ENCODE measurements at regions of chr14 and their contacts with region 1.

Region 1: GRCh38 chr14:59428581-59429012 is 36.6 kb downstream of the GPR135 start:
- DNase-seq: no peak
- ATAC-seq: peak in 2 of 4 donors; percentile 17 to 27
- H3K4me3 ChIP-seq: no peak overlapping the region
- H3K27ac ChIP-seq: peak overlapping the region in 11 of 12 donors; percentile 44 to 79 (median 63)
- H3K4me1 ChIP-seq: peaks cover 0 to 64% (median 35%) of the 10 kb centered on the region in 12 donors
- H3K27me3 ChIP-seq: no peaks in the 10 kb centered on the region
- CTCF ChIP-seq: peak in 11 of 12 donors; percentile 11 to 64 (median 39)
- POLR2A ChIP-seq: no peak

Region 2: GRCh38 chr14:59132796-59133494 is 295.7 kb before region 1 on chr14:
- intact Hi-C with region 1: loop called in 2 of 10 experiments (anchors 5 kb)
- DNase-seq: no peak
- ATAC-seq: peak in 1 of 4 donors; percentile 61
- H3K4me3 ChIP-seq: no peak overlapping the region
- H3K27ac ChIP-seq: no peak overlapping the region
- H3K4me1 ChIP-seq: peaks cover 0 to 11% (median 0%) of the 10 kb centered on the region in 12 donors
- H3K27me3 ChIP-seq: no peaks in the 10 kb centered on the region
- CTCF ChIP-seq: peak in 5 of 12 donors; percentile 13 to 40 (median 18)
- POLR2A ChIP-seq: no peak

Region 3: DNA sequence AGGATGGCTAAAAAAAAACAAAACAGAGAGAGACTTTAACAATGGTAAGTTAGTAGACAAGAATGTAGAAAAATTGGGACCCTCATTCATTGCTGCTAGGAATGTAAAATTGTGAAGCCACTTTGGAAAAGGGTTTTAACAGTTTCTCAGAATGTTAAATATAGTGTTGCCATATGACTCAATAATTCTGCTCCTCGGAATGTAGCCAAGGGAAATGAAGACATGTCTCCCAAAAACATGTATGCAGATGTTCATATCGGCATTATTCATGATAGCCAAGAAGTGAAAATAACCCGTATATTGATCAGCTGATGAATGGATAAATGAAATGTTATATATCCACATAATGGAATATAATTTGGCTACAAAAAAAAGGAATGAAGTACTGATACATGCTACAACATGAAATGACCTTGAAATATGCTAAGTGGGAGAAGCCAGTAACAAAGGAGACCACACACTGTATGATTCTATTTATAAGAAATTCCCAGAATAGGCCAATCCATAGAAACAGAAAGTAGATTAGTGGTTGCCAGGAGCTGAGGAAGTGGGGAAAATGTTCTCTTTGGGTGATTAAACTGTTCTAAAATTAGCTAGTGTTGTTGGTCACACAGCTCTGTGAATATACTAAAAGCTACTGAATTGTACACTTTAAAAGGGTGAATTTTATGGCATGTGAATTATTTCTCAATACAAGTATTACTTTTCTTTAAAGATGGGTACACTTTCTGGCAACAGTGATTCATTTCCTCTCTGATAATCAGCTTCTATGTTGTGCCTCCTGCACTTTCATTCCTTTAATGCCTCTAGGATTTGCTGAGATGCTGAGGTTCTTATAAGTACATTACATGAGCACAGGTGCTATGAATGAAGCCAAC is 107.6 kb before region 1 on chr14:
- intact Hi-C with region 1: loop called in 1 of 10 experiments (anchors 10 kb)
- DNase-seq: no peak
- ATAC-seq: peak; percentile 27 to 84 (median 76)
- H3K4me3 ChIP-seq: peak overlapping the region in 1 of 12 donors; percentile 12
- H3K27ac ChIP-seq: peak overlapping the region; percentile 68 to 90 (median 79)
- H3K4me1 ChIP-seq: peaks cover 6 to 72% (median 58%) of the 10 kb centered on the region in 12 donors
- H3K27me3 ChIP-seq: no peaks in the 10 kb centered on the region
- CTCF ChIP-seq: no peak
- POLR2A ChIP-seq: no peak

Region 4: DNA sequence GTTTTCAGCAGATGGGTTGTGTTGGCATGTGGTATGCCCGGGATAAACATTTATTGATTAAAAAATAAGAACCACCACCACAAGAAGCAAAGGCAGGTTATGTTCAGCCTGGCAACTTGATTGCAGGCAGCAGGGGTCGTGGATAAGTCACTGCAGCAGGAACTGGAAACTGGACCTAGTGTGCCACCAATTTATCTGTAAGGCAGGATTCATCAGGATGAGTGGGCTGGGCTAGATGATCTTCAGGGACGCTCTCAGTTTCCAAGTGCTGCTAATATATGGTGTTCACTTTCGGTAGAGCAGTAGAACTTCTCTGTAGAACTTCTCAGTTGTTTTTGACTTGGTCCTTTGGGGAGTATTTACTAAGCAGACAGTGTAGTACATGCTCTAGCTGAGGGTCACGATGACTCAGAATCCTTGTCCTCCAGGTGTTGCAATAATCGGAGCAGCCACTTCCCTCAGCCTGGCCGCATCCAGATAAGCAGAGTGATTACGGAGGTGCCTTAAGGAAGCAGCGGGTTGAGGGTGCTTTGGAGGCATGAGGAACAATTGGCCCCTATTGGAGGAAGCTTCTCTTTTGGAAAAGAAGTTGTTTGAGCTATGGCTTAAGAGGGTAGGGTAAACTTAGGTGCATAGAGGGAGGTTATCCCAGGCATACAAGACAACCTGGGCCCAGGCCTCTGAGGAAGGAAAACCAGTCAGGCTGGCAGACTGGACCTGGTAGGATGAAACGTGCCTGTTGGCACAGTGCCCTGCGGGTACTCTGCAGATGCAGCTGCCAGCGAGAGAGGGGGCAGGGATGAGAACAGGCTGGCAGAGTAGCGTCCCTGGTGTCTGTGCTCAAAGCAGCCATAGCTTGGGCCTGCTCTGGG is 67.4 kb before region 1 on chr14:
- intact Hi-C with region 1: loop called in 6 of 10 experiments (anchors 5 to 10 kb)
- DNase-seq: peak; percentile 75 to 92 (median 86)
- ATAC-seq: peak; percentile 68 to 77 (median 74)
- H3K4me3 ChIP-seq: peak overlapping the region in 5 of 12 donors; percentile 4 to 37 (median 21)
- H3K27ac ChIP-seq: peak overlapping the region; percentile 61 to 93 (median 84)
- H3K4me1 ChIP-seq: peaks cover 0 to 83% (median 60%) of the 10 kb centered on the region in 12 donors
- H3K27me3 ChIP-seq: no peaks in the 10 kb centered on the region
- CTCF ChIP-seq: peak in 3 of 12 donors; percentile 9 to 24 (median 19)
- POLR2A ChIP-seq: no peak

Region 5: GRCh38 chr14:59394268-59394667 is 34.3 kb before region 1 on chr14:
- intact Hi-C with region 1: no loop called
- DNase-seq: no peak
- ATAC-seq: no peak
- H3K4me3 ChIP-seq: no peak overlapping the region
- H3K27ac ChIP-seq: no peak overlapping the region
- H3K4me1 ChIP-seq: peaks cover 0 to 7% (median 0%) of the 10 kb centered on the region in 12 donors
- H3K27me3 ChIP-seq: no peaks in the 10 kb centered on the region
- CTCF ChIP-seq: no peak
- POLR2A ChIP-seq: no peak

Region 6: GRCh38 chr14:59474172-59474571 is 45.6 kb after region 1 on chr14:
- intact Hi-C with region 1: no loop called
- DNase-seq: no peak
- ATAC-seq: no peak
- H3K4me3 ChIP-seq: no peak overlapping the region
- H3K27ac ChIP-seq: peak overlapping the region in 1 of 12 donors; percentile 1
- H3K4me1 ChIP-seq: peaks cover 0 to 9% (median 0%) of the 10 kb centered on the region in 12 donors
- H3K27me3 ChIP-seq: no peaks in the 10 kb centered on the region
- CTCF ChIP-seq: no peak
- POLR2A ChIP-seq: no peak

Region 7: DNA sequence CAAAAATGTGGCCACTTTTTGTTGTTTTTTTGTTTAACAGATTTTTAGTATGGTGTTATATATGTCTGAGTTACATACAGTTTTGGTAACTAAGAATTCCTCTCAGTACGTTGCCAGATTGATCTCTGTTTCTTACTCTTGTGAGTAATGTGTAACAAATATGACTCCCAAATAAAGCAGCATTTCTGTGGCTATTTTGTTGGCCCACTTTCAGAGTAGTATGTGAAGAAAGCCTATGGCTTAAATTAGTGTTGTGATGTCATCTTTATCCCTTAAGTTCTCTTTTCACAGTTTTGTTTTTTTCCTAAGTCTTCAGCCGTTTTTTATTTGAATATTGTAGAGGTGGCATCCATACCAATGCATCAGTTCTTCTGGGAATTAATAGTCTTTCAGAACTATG is 673.8 kb after region 1 on chr14:
- intact Hi-C with region 1: no loop called
- DNase-seq: no peak
- ATAC-seq: no peak
- H3K4me3 ChIP-seq: no peak overlapping the region
- H3K27ac ChIP-seq: peak overlapping the region in 4 of 12 donors; percentile 18 to 34 (median 29)
- H3K4me1 ChIP-seq: peaks cover 0 to 59% (median 36%) of the 10 kb centered on the region in 12 donors
- H3K27me3 ChIP-seq: no peaks in the 10 kb centered on the region
- CTCF ChIP-seq: no peak
- POLR2A ChIP-seq: no peak